ENCODE measurements at regions of chr6 and their contacts with region 1.

Region 1: DNA sequence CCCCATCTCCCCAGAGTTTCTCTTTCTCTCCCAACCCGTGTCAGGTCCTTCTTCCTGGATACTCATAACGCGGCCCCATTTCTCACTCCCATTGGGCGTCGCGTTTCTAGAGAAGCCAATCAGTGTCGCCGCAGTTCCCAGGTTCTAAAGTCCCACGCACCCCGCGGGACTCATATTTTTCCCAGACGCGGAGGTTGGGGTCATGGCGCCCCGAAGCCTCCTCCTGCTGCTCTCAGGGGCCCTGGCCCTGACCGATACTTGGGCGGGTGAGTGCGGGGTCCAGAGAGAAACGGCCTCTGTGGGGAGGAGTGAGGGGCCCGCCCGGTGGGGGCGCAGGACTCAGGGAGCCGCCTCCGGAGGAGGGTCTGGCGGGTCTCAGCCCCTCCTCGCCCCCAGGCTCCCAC is at the start of gene HLA-F:
- DNase-seq: peak; percentile 60 to 90 (median 78)
- ATAC-seq: peak; percentile 98
- H3K4me3 ChIP-seq: peak within 1 kb of the TSS; percentile 91 to 100
- H3K27ac ChIP-seq: peak within 1 kb of the TSS; percentile 89 to 95
- H3K4me1 ChIP-seq: peaks cover 0 to 36% of the 10 kb centered on the region in 2 donors
- H3K27me3 ChIP-seq: no peaks in the 10 kb centered on the region
- CTCF ChIP-seq: no peak
- polyA plus RNA-seq, gene HLA-F: 15.4 to 23.9 (median 18.1) TPM

Region 2: GRCh38 chr6:28985462-28986164 is 737.7 kb before region 1 on chr6:
- intact Hi-C with region 1: no loop called
- DNase-seq: peak; percentile 80 to 96 (median 87)
- ATAC-seq: peak; percentile 79
- H3K4me3 ChIP-seq: peak overlapping the region; percentile 30 to 40
- H3K27ac ChIP-seq: peak overlapping the region; percentile 71 to 84
- H3K4me1 ChIP-seq: peaks cover 0 to 26% of the 10 kb centered on the region in 2 donors
- H3K27me3 ChIP-seq: peaks cover 0 to 22% of the 10 kb centered on the region in 2 donors
- CTCF ChIP-seq: no peak

Region 3: DNA sequence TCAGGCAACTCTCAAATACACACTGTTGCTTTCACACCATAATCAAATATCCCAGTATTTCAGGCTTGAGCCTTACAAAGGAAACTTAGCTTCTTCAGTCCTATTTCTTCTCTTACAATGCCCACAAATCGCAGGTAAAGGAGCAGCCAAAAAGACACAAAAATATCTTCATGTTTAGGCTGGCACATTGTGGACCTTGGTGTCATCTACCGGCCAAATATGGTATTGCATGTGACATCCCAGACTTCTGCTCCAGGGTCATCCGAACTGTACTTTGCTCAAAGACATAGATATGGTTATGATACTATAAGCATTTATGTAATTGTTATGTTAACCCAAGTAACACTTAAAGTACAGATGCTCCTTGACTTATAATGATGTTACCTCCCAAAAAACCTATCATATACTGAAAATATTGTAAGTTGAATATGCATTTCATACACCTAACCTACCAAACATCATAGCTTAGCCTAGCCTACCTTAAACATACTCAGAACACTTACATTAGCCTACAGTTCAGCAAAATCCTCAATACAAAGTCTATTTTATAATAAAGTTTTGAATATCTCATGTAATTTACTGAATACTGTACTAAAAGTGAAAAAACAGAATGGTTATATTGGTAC is 133.7 kb before region 1 on chr6:
- intact Hi-C with region 1: no loop called
- DNase-seq: peak in 2 of 4 donors; percentile 36 to 59
- ATAC-seq: peak; percentile 92
- H3K4me3 ChIP-seq: no peak overlapping the region
- H3K27ac ChIP-seq: no peak overlapping the region
- H3K4me1 ChIP-seq: no peaks in the 10 kb centered on the region
- H3K27me3 ChIP-seq: peaks cover 5 to 33% of the 10 kb centered on the region in 2 donors
- CTCF ChIP-seq: peak; percentile 88 to 96

Region 4: DNA sequence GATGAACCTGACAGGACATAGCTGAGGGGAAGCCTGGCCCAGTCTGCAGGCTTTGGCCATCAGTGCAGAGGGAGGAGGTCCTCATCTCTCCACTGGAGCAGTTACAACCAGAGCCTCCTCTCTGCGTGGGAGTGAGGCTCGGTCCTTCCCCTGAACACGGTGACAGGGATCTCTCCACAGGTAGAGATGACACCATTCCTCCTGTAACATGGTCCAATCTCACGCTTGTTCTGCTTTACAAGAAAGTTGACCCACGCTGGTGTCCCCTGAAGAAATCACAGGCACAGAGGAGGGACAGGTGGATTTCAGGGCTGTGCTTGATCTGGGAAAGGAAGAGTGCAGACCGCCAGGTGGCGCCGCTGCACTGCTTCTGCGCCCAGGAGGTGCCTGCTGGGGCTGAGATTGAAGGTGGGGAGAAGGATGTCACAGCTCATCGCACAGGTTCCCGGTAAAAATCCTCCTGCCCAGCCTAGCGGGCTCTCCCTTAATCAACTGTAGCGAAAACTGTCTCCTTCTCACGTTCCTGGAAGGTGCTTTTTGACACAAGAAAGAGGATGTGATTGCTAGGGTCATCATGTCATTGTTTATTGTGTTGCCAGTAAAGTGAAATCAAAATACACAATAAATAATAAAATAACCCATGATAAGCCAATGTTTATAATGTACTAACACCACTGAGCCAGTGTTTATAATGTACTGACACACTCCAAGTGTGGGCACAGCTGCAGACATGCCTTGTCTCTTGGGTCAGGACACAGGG is 124.8 kb after region 1 on chr6:
- intact Hi-C with region 1: no loop called
- DNase-seq: peak; percentile 57 to 96 (median 75)
- ATAC-seq: peak; percentile 96
- H3K4me3 ChIP-seq: no peak overlapping the region
- H3K27ac ChIP-seq: no peak overlapping the region
- H3K4me1 ChIP-seq: peaks cover 0 to 8% of the 10 kb centered on the region in 2 donors
- H3K27me3 ChIP-seq: peaks cover 22 to 91% of the 10 kb centered on the region in 2 donors
- CTCF ChIP-seq: peak; percentile 89 to 90

Region 5: GRCh38 chr6:30013291-30013922 is 290.1 kb after region 1 on chr6:
- intact Hi-C with region 1: loop called in 1 of 2 experiments (anchors 10 kb)
- DNase-seq: peak in 1 of 4 donors; percentile 87
- ATAC-seq: peak; percentile 82
- H3K4me3 ChIP-seq: no peak overlapping the region
- H3K27ac ChIP-seq: no peak overlapping the region
- H3K4me1 ChIP-seq: no peaks in the 10 kb centered on the region
- H3K27me3 ChIP-seq: peaks cover 0 to 1% of the 10 kb centered on the region in 2 donors
- CTCF ChIP-seq: peak; percentile 89 to 93

Measured in left lung (tissue), 14 donors.